Common myeloid progenitor, CD34-positive (primary cell): ENCODE measurements at regions of chr9 and their contacts with region 1.

Region 1: DNA sequence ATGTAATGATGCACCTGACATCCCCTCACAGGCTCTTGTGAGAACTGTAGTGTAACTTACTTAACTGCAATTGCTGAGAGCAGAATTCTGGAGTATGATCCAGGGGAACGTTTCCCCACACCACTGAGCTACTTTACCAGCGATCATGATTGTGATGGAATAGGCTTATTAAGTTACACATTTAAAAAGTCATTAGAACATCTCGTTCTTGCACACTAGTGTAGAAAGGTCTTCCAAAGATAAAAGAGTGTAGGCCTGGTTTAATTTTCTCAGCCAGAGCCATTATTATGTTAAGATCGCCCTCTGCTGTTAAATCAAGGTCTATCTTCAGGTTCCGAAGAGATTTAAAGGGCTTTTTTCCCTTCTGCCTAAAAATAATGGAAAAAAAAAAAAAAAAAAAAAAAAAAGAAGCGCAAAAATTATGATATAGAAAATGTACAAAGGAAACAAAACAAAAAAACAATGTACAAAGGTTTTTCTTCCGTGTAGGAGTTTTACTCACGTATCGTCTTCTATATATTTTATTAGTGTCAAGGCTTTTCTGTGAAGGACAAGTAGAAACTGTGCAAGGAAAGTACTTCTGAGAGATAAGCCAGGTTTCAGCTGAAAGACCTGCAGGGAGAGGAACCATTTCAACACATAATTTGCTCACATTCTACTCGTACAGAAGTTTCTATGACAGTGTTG is 18.6 kb upstream of the MOB3B start:
- DNase-seq: peak; percentile 47 to 65 (median 58)
- H3K4me3 ChIP-seq: no peak overlapping the region
- H3K27ac ChIP-seq: no peak overlapping the region
- H3K4me1 ChIP-seq: no peaks in the 10 kb centered on the region
- H3K27me3 ChIP-seq: no peaks in the 10 kb centered on the region

Region 2: GRCh38 chr9:27333241-27334052 is 214.8 kb before region 1 on chr9:
- CTCF ChIA-PET with region 1: interaction called, 71 read pairs
- POLR2A ChIA-PET with region 1: interaction called, 3 read pairs
- DNase-seq: peak; percentile 78 to 87 (median 79)
- H3K4me3 ChIP-seq: no peak overlapping the region
- H3K27ac ChIP-seq: no peak overlapping the region
- H3K4me1 ChIP-seq: peaks cover 0 to 9% (median 3%) of the 10 kb centered on the region in 4 experiments
- H3K27me3 ChIP-seq: no peaks in the 10 kb centered on the region

Region 3: DNA sequence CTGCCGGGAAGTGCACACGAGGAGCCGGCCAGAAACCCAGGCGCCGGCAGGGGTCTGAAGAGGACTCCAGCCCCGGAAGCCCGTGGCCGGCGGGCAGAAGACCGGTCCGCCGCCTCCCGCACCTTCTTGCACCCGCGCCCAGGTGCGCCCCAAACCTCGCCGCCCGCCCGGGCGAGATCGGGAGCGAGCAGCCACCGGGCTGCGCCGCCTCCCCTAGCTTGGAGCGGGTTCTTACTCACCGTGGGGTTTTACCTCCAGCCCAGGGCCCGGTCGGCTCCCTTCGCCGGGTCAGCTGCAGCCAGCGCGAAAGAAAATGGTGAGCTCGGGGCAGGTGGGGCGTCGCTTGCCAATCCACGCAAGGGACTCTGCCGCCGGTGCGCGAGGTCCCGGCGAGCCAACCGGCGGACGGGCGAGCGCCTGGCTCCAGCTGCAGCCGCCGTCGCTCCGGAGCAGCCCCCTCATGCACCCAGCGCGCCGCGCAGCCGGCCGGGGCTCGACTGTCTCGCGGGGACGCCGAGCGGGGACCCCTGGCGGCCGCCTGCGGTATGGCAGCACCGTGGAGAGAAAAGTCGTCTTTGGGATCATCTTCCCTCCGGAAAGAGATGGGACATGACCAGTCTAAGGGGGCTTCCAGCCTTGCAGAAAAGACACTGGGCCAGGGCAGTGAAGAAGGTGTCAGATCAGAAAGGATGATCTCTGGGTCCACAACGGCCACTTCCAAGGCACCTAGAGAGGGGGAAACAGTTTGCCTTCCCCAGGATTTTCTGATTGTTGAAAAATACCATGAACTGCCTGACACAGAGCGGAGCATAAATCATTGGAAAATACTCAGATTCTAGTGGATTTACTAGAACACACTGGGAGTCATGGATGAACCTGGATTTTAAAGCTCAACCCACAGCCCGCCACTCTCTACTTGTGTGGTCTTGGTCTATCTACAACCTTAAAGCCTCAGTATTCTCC is 18.6 kb before region 1 on chr9 and contains the start of gene MOB3B:
- CTCF ChIA-PET with region 1: interaction called, 49 read pairs
- POLR2A ChIA-PET with region 1: interaction called, 4 read pairs
- DNase-seq: peak; percentile 72 to 87 (median 80)
- H3K4me3 ChIP-seq: peak within 1 kb of the TSS; percentile 56 to 88 (median 78)
- H3K27ac ChIP-seq: peak within 1 kb of the TSS in 1 of 2 experiments; percentile 45
- H3K4me1 ChIP-seq: peaks cover 0 to 20% (median 15%) of the 10 kb centered on the region in 4 experiments
- H3K27me3 ChIP-seq: peaks cover 0 to 10% (median 2%) of the 10 kb centered on the region in 5 experiments

Region 4: DNA sequence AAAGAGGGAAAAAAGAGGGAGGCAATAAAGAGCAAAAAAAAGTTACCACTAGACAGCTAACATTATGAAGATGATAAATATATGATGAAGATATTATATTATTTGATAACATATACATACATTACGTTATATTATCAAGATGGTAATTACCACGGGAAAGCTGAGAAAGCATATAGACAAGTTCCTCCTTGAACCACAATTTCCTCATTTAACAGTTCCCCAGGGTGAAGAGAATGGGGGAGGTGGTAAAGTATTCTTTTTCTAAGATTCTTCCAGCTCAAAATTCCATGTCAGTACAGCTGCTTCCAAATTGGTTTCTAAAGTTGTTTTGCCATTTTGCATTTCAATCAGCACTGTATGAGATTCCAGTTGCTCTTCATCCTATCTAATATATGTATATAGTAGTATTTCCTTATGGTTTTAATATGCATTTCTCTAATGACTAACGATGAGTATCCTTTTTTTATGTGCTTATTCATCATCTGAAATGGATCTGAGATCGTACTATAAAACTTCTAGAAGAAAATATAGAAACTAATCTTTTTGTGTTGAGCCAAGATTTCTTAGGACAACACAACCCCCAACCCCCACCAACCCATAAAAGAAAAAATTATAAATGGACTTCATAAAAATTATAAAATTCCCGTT is 74.6 kb after region 1 on chr9:
- CTCF ChIA-PET with region 1: no interaction called
- POLR2A ChIA-PET with region 1: no interaction called
- DNase-seq: peak; percentile 17 to 67 (median 53)
- H3K4me3 ChIP-seq: no peak overlapping the region
- H3K27ac ChIP-seq: no peak overlapping the region
- H3K4me1 ChIP-seq: peaks cover 1 to 12% (median 2%) of the 10 kb centered on the region in 4 experiments
- H3K27me3 ChIP-seq: no peaks in the 10 kb centered on the region

Region 5: DNA sequence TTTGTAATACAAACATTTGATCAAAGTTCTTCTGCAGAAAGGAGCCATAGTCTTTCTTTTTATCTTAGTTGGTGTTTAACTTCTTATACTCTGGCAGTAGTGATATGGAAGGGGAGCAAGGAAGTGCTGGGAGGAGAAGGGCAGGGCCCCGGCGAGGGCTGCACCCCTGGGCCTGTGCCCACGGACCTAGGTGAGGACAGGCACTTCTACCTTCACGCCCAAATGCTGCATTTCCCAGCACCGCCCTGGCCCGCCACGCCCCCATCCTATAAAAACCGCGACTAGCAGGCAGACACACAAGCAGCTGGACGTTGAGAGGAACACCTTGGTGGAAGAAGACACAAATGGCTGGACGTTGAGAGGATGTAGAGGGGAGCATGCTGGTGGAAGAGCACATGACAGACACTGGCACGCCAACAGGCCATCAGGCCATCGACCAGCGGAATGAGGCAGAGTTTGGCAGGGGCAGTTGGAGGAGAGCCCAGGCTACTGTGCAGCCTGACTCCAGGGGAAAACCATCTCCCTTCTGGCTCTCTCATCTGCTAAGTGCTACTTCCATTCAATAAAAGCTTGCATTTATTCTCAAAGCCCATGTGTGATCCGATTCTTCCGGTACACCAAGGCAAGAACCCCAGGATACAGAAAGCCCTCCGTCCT is 106.6 kb after region 1 on chr9:
- CTCF ChIA-PET with region 1: no interaction called
- POLR2A ChIA-PET with region 1: no interaction called
- DNase-seq: no peak
- H3K4me3 ChIP-seq: no peak overlapping the region
- H3K27ac ChIP-seq: no peak overlapping the region
- H3K4me1 ChIP-seq: peaks cover 0 to 7% (median 0%) of the 10 kb centered on the region in 4 experiments
- H3K27me3 ChIP-seq: no peaks in the 10 kb centered on the region